HEK293 (cell line): ENCODE measurements at regions of chr22 and their contacts with region 1.

Region 1: GRCh38 chr22:29154364-29155048 is 51.2 kb upstream of the EMID1 start:
- H3K4me3 ChIP-seq: no peak overlapping the region
- H3K27ac ChIP-seq: no peak overlapping the region
- H3K4me1 ChIP-seq: no peaks in the 10 kb centered on the region
- CTCF ChIP-seq: peak; percentile 95

Region 2: GRCh38 chr22:29055192-29055830 is 99.2 kb before region 1 on chr22:
- CTCF ChIA-PET with region 1: interaction called, 11 read pairs
- POLR2A ChIA-PET with region 1: no interaction called
- H3K4me3 ChIP-seq: no peak overlapping the region
- H3K27ac ChIP-seq: no peak overlapping the region
- H3K4me1 ChIP-seq: peaks cover 7% of the 10 kb centered on the region
- CTCF ChIP-seq: no peak

Region 3: GRCh38 chr22:29083933-29084591 is 70.4 kb before region 1 on chr22:
- CTCF ChIA-PET with region 1: interaction called, 16 read pairs
- POLR2A ChIA-PET with region 1: no interaction called
- H3K4me3 ChIP-seq: no peak overlapping the region
- H3K27ac ChIP-seq: no peak overlapping the region
- H3K4me1 ChIP-seq: peaks cover 20% of the 10 kb centered on the region
- CTCF ChIP-seq: no peak

Region 4: GRCh38 chr22:29090039-29090438 is 64.5 kb before region 1 on chr22:
- CTCF ChIA-PET with region 1: interaction called, 14 read pairs
- POLR2A ChIA-PET with region 1: no interaction called
- H3K4me3 ChIP-seq: no peak overlapping the region
- H3K27ac ChIP-seq: no peak overlapping the region
- H3K4me1 ChIP-seq: peaks cover 3% of the 10 kb centered on the region; the same call in 1 of the 2 replicates
- CTCF ChIP-seq: no peak

Region 5: GRCh38 chr22:29105468-29105867 is 49.0 kb before region 1 on chr22:
- CTCF ChIA-PET with region 1: interaction called, 16 read pairs
- POLR2A ChIA-PET with region 1: no interaction called
- H3K4me3 ChIP-seq: no peak overlapping the region
- H3K27ac ChIP-seq: no peak overlapping the region
- H3K4me1 ChIP-seq: peaks cover 8% of the 10 kb centered on the region; the same call in 1 of the 2 replicates
- CTCF ChIP-seq: no peak

Region 6: DNA sequence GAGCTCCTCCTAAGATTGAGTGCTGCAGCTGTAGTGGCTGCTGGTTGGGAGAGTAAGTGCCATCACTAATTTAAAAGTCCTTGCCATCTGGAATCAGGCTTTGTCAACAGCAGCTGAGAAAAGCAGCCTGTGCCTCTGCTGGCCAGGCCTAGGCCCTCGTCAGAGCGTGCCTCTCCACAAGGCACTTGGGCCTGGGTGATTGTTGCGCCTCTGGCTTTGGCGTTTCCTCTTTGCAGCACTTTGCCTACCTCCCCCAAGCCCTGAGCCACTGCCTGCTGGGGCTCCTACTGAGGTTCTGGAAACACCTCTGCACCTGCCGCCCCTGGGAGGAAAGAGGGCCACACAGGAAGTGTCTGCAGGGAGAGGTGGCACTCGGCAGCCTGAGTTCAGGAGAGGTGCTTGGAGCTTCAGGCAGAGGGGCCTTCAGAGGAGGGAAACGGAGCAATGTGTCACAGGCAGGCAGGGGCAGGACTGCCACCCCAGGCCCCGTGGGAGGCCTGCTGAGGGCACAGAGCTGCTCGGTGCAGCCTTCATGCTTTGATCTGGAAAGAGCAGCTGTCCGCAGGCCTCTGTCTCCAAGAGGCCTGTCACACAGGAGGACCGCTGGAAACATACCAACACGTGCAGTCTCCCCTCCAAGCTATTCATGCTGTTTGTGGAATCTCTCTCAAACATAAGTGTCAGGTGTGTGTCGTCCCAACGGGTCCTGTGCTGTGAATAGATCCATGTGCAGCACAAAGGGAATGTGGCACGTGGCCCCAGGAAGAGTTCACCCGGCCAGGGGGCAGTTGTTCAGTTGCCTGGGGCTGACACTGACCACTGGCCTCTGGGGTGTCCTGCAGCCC is 10.3 kb before region 1 on chr22:
- CTCF ChIA-PET with region 1: interaction called, 33 read pairs
- POLR2A ChIA-PET with region 1: no interaction called
- H3K4me3 ChIP-seq: no peak overlapping the region
- H3K27ac ChIP-seq: no peak overlapping the region
- H3K4me1 ChIP-seq: no peaks in the 10 kb centered on the region
- CTCF ChIP-seq: no peak

Region 7: GRCh38 chr22:29175312-29175835 is 20.9 kb after region 1 on chr22:
- CTCF ChIA-PET with region 1: no interaction called
- POLR2A ChIA-PET with region 1: no interaction called
- H3K4me3 ChIP-seq: no peak overlapping the region
- H3K27ac ChIP-seq: no peak overlapping the region
- H3K4me1 ChIP-seq: no peaks in the 10 kb centered on the region
- CTCF ChIP-seq: no peak